Vagina (tissue), 2 donors: ENCODE measurements at regions of chr11 and their contacts with region 1.

Region 1: DNA sequence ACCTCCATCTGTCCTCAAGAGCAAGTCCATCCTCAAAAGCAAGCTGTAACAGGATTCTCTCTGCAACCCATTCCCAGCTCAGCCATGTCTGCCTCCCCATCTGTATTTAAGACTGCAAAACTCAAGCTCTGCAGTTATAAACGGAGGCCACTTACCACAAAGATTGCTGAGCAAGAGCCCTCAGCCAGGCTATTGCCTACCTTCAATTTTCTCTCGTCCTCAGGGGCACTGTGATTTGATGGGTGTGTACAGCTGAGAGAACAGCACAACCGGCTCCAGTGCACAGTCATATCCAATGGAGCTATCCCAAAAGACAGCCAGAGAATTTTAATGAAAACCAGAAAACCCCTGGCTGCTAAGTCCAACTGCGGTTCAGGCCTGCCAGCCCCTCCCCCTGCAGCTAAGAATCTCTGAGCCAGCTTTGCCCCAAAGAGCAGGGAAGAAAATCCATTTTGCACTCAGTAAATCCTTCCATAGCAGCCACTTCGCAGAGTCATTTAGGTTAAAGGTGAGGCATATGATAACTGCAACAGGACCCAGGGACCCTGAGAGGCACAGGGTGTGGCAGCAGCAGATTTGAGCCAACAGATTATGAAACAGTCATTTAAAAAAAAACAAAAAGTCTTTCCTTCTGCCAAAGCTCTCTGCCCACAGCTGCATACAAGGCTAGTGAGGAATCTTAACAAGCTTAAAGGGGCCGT is 37.6 kb downstream of the RAB30 start:
- DNase-seq: no peak
- H3K4me3 ChIP-seq: peak overlapping the region; percentile 19 to 25
- H3K27ac ChIP-seq: peak overlapping the region; percentile 71
- H3K4me1 ChIP-seq: peaks cover 57% of the 10 kb centered on the region
- H3K27me3 ChIP-seq: no peaks in the 10 kb centered on the region
- CTCF ChIP-seq: no peak
- POLR2A ChIP-seq: no peak

Region 2: GRCh38 chr11:83051760-83052671 is 17.9 kb after region 1 on chr11:
- intact Hi-C with region 1: loop called (anchors 2 kb)
- DNase-seq: no peak
- H3K4me3 ChIP-seq: no peak overlapping the region
- H3K27ac ChIP-seq: peak overlapping the region; percentile 67
- H3K4me1 ChIP-seq: peaks cover 50% of the 10 kb centered on the region
- H3K27me3 ChIP-seq: no peaks in the 10 kb centered on the region
- CTCF ChIP-seq: no peak
- POLR2A ChIP-seq: no peak

Region 3: GRCh38 chr11:83071567-83072349 is 37.6 kb after region 1 on chr11 and contains the start of gene RAB30:
- intact Hi-C with region 1: no loop called
- DNase-seq: peak; percentile 99 to 100
- H3K4me3 ChIP-seq: peak within 1 kb of the TSS; percentile 86 to 88
- H3K27ac ChIP-seq: peak within 1 kb of the TSS; percentile 93
- H3K4me1 ChIP-seq: peaks cover 42% of the 10 kb centered on the region
- H3K27me3 ChIP-seq: no peaks in the 10 kb centered on the region
- CTCF ChIP-seq: no peak
- POLR2A ChIP-seq: peak; percentile 3 to 82
- total RNA-seq, gene RAB30: 10.8 TPM

Region 4: DNA sequence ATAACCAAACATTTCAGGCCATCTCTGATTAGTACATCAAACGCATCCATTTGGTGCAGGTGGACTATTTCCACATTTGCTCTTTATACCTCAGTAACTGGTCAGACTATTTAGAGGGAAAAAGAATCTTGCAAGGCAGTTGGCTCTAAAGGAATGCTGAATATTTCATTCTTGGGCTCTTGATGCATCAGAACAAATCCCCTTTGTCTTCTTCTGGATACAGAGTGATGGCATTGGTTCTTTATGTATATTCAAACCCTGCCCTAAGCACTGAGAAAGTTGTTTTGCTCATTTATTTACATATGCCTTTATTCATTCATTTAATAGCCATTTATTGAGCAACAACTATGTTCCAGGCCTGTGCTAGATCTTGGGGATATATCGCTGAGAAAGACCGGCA is 68.7 kb after region 1 on chr11:
- intact Hi-C with region 1: no loop called
- DNase-seq: no peak
- H3K4me3 ChIP-seq: no peak overlapping the region
- H3K27ac ChIP-seq: no peak overlapping the region
- H3K4me1 ChIP-seq: no peaks in the 10 kb centered on the region
- H3K27me3 ChIP-seq: no peaks in the 10 kb centered on the region
- CTCF ChIP-seq: no peak
- POLR2A ChIP-seq: no peak